ENCODE measurements at regions of chr11 and their contacts with region 1.

Region 1: GRCh38 chr11:111283945-111284481 is 14.3 kb upstream of the POU2AF3 start:
- DNase-seq: no peak
- ATAC-seq: no peak
- H3K4me3 ChIP-seq: no peak overlapping the region
- H3K27ac ChIP-seq: no peak overlapping the region
- H3K4me1 ChIP-seq: no peaks in the 10 kb centered on the region
- H3K27me3 ChIP-seq: peaks cover 14% of the 10 kb centered on the region
- CTCF ChIP-seq: no peak
- POLR2A ChIP-seq: no peak
- RAD21 ChIP-seq: no peak

Region 2: DNA sequence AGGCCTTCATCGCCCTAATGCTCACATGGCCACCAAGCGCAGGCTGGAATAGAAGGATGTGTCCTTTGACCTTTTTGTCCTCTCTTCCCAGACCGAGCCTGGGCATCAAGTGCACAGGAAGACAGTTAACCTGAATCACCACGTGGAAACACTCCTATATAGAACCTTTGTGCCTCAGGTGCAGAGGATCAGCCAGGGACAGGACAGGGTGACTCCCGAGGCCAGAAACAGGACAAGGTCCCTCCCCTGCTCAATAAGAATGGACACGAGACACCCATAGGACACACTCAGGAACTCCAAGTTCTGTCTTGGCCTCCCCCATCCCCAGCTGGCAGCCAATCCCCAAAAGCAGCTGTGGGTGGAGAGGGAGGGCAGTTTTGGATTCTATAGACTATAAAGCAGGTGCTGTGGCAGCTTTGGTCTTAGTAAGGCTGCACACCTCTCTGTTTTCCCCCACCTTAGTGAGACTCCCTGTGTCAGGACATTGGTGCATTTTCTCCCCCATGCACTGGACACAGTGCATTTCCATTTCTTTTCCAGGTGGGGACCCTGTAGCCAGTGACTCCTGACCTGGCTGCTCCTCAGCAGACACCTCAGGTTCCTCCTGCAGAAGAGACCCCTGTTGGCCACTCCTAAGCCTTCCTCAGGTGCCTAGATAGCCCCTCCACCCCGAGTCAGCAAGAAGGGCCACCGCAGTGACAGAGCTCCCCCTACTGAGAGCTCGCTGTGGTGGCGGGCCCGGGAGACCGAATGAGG is 138.7 kb after region 1 on chr11:
- CTCF ChIA-PET with region 1: interaction called, 39 read pairs
- POLR2A ChIA-PET with region 1: no interaction called
- RAD21 ChIA-PET with region 1: no interaction called
- intact Hi-C with region 1: loop called (anchors 1 kb)
- DNase-seq: peak; percentile 37
- ATAC-seq: peak; percentile 97
- H3K4me3 ChIP-seq: no peak overlapping the region
- H3K27ac ChIP-seq: no peak overlapping the region
- H3K4me1 ChIP-seq: peaks cover 0 to 10% of the 10 kb centered on the region in 2 experiments; a peak in 2 of 4 replicates
- H3K27me3 ChIP-seq: no peaks in the 10 kb centered on the region
- CTCF ChIP-seq: peak; percentile 88 to 94 (median 93)
- POLR2A ChIP-seq: no peak
- RAD21 ChIP-seq: peak; percentile 93

Region 3: DNA sequence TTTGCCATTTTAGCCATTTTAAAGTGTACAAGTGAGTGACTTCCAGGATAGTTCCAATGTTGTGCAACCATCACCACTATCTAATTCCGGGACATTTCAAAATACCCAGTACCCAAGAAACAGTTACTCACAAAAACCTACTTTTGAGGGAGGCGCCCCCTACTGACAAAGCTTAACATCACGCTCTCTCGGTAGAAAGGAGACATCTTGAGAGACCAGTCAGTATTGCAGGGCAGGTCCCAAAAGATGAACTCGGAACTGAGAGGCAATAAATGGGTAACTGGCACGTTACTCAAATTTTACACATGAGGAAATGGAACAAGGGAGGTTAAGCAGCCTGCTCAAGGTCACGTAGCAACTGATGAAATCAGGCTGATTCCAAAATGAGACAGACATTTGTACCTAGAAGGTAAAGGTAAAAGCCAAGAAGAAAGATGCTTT is 145.1 kb after region 1 on chr11:
- CTCF ChIA-PET with region 1: interaction called, 39 read pairs
- POLR2A ChIA-PET with region 1: no interaction called
- RAD21 ChIA-PET with region 1: no interaction called
- intact Hi-C with region 1: loop called (anchors 1 kb)
- DNase-seq: peak; percentile 39
- ATAC-seq: peak; percentile 88
- H3K4me3 ChIP-seq: no peak overlapping the region
- H3K27ac ChIP-seq: no peak overlapping the region
- H3K4me1 ChIP-seq: peaks cover 3 to 12% of the 10 kb centered on the region in 2 experiments; a peak in 2 of 4 replicates
- H3K27me3 ChIP-seq: no peaks in the 10 kb centered on the region
- CTCF ChIP-seq: peak; percentile 91 to 98 (median 94)
- POLR2A ChIP-seq: no peak
- RAD21 ChIP-seq: peak; percentile 65

Region 4: DNA sequence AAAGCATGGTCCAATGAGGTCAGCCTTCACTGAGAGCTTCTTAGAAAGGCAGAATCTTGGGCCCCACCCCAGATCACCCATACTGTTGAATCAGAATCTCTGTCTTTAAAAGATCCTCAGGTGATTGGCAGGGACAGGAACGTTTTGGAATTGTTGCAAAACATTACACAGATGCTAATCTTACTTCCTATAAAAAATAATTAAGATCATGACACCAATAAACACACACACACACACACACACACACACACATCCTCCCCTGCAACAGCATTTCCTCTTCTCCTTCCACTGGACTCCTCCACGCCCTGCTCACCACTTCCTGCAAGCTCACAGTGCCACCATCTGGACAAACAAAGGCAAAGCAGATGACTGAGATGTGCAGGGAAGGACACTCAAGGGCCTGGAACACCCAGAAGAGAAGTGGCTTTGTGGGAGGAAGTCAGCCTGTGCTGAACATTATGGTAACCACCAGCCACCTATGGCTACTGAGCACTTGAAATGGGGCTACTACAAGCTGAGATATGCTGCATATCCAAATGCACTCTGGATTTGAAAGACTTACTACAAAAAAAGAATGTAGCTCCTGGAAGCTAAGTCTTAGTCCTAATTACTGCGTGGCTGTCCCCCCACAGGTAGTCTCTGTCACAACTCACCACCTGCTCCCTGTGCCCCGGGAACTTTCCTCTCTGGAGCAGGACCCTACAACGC is 162.5 kb after region 1 on chr11:
- CTCF ChIA-PET with region 1: interaction called, 11 read pairs
- POLR2A ChIA-PET with region 1: no interaction called
- RAD21 ChIA-PET with region 1: interaction called in 1 of 2 experiments, 3 read pairs
- intact Hi-C with region 1: loop called (anchors 1 kb)
- DNase-seq: peak; percentile 85
- ATAC-seq: peak; percentile 99
- H3K4me3 ChIP-seq: no peak overlapping the region
- H3K27ac ChIP-seq: no peak overlapping the region
- H3K4me1 ChIP-seq: peaks cover 0 to 7% of the 10 kb centered on the region in 2 experiments; a peak in 2 of 4 replicates
- H3K27me3 ChIP-seq: no peaks in the 10 kb centered on the region
- CTCF ChIP-seq: peak; percentile 90 to 92 (median 91)
- POLR2A ChIP-seq: no peak
- RAD21 ChIP-seq: peak; percentile 97